ENCODE measurements at regions of chr17 and their contacts with region 1.

Region 1: DNA sequence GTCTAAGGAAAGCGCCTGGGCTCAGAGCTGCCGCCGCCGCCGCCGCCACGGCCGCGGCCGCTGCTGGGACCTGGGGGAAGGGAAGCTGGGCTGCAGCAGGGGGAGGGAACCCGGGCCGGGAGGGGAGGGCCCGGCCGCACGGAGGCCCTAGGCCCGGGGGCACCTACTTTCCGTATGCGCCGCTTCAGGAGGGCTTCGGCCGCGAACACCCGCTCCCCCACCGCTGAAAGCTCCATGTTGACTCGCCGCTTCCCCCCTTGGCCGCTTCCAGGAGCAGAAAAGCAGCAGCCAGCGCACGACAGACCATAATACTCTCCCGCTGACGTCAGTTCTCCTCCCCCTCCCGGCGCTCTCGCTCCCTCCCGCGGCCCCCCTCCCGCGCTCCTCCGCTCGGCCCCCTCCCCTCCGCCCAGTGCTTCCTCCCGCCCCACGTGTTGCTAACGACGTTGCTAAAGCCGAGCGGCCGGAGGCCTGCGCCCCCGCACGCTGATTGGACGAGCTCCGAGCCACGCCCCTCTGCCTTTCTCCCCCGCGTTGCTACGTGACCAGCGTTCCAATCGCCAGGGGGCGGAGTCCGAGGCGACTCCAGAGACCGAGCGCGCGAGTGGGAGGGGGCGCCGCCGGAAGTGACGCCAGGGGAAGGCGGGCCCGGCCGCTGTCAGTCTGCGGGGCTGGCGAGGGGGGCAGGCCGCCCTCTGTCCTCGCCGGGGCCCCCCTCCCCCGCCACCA is at the start of gene CBX8:
- DNase-seq: peak; percentile 100
- total RNA-seq, gene CBX8: 4.4 to 5.1 TPM

Region 2: DNA sequence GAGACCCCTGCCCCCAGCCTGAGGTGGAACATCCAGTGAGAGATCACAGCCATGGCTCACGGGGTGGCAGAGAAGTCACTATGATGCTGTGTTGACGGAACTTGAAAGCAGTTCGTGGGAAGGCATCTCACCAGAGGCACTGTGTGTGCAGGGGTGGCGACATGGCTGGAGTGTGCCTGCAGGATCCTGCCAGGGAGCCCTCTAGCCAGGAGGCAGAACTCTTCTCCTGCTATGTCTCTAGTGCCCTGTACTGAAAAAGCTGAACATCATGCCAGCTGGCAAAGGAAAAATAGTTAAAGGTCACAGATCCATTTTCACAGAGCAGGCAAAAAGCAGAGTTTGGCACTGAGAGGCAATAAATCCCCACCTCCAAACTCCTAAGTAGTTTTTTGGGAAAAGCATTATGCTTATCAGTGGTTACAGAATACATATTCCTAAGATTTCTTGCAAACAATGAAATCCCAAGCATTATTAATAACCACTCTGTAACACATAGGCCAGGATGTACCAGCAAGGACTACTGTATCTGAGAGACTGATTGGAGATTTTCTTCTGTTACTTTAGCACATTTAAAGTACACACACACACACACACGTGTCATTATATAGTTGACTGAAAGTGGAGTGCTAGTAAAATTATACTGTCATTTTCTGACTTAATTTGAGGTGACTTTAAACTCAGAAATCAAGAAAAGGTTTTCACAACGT is 1801.6 kb before region 1 on chr17:
- intact Hi-C with region 1: no loop called
- DNase-seq: no peak

Region 3: GRCh38 chr17:79104898-79105600 is 691.9 kb before region 1 on chr17:
- intact Hi-C with region 1: no loop called
- DNase-seq: no peak

Region 4: GRCh38 chr17:79769596-79770520 is 27.1 kb before region 1 on chr17:
- intact Hi-C with region 1: loop called in 1 of 2 experiments (anchors 1 kb)
- DNase-seq: peak; percentile 71

Region 5: GRCh38 chr17:79839363-79840268 is 42.7 kb after region 1 on chr17 and contains the start of gene CBX4:
- intact Hi-C with region 1: loop called (anchors 5 to 10 kb)
- DNase-seq: peak; percentile 98
- total RNA-seq, gene CBX4: 11.5 to 14.4 TPM